GM13977 (cell line): ENCODE measurements at regions of chr9 and their contacts with region 1.

Region 1: GRCh38 chr9:124011420-124012301 is at the start of gene LHX2:
- DNase-seq: peak; percentile 88
- CTCF ChIP-seq: peak; percentile 26

Region 2: GRCh38 chr9:123544007-123544827 is 467.4 kb before region 1 on chr9:
- in situ Hi-C with region 1: loop called (anchors 25 kb)
- DNase-seq: peak; percentile 57
- CTCF ChIP-seq: peak; percentile 86

Region 3: DNA sequence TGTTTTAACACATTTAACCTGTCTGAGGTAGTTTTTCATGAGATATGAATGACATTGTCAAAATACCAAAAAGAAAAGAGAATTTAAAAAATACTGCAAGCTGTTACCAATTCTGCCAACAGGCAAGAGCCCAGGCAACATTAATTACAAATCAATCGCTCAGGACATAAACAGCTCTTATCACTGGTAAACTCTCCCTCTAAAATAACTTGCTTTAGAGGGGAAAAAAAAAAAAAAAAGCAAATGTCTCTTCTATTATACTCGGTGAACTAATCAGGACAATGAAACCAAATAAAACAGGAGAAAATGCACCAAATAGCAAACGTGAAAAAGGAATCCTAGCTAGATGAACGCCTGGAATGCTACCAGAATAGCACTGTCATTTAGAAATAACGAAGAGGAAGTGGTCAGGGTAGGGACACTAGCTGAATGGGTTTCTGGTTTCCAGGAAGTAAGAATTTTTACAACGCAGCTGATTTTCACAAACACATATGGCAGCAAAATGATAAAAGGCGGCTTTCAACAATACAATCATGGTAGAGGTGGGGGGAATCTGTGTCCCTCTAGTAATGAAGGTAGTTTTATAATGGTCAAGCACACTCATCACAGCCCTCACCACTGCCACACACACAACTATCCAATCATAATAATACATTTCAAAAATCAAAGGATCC is 176.6 kb before region 1 on chr9:
- in situ Hi-C with region 1: no loop called
- DNase-seq: peak; percentile 26
- CTCF ChIP-seq: no peak